Aorta (tissue), 5 donors: ENCODE measurements at regions of chr2 and their contacts with region 1.

Region 1: DNA sequence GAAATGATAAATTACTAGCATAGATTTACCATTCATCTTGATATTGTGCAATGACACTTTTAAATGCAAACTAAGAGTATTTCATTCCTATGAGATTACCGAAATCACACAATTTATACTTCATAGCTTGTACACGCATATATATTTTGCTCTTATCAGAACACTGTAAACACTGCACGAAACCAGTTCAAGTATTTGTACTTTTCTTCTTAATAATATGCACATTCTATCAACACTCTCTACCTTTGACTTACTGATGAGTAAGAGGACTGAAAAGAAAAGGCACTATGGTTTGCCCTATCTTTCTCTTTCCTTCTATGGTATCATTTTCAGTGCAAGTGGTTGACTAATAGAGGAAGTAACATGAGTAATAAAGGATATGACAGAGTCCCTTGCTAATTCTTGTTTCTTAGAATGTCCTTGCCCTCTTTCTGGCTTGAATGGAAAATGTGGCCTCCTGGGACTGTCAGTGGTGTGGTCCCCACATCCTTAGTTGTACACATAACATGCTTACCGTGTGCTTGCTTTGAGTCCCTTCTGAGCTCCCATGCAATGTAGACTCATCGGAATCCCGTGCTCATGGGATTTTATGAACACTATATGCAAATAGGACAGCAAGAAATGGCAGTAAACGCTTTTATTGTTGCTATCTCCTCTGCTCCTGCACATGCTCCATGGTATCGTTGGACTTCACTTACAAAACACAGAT is 363.5 kb upstream of the TNP1 start:
- DNase-seq: peak in 1 of 2 donors; percentile 66
- ATAC-seq: peak; percentile 66
- H3K4me3 ChIP-seq: no peak overlapping the region
- H3K27ac ChIP-seq: peak overlapping the region; percentile 11 to 21
- H3K4me1 ChIP-seq: peaks cover 4 to 6% of the 10 kb centered on the region in 2 donors
- H3K27me3 ChIP-seq: no peaks in the 10 kb centered on the region

Region 2: DNA sequence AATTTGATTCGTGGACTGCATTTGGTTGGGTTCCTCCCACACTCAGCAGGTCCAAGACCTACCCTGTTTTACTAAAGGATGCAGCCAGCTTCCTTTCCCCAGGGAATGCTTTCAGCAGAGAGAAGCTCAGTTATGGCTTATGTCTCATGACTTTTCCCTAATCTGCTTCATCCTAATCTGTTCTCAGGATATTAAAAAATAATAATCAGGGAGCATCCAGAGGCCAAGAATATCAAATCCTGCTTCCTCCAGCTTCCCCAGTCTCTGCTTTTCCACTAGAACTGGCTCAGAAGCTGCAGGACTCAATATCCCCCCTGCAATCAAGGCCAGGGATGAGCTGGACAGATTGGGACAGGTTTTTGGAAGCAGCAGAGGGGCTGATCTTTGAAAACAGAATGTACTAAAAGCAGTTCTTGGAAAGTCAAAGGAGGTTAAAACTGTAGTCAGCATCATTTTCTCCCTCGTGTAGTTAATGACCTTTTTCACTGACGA is 36.7 kb before region 1 on chr2:
- intact Hi-C with region 1: loop called in 1 of 2 experiments (anchors 5 kb)
- DNase-seq: peak in 1 of 2 donors; percentile 50
- ATAC-seq: peak; percentile 90
- H3K4me3 ChIP-seq: no peak overlapping the region
- H3K27ac ChIP-seq: peak overlapping the region in 1 of 2 donors; percentile 96
- H3K4me1 ChIP-seq: peaks cover 4 to 7% of the 10 kb centered on the region in 2 donors
- H3K27me3 ChIP-seq: no peaks in the 10 kb centered on the region